ENCODE measurements at regions of chr2 and their contacts with region 1.

Region 1: DNA sequence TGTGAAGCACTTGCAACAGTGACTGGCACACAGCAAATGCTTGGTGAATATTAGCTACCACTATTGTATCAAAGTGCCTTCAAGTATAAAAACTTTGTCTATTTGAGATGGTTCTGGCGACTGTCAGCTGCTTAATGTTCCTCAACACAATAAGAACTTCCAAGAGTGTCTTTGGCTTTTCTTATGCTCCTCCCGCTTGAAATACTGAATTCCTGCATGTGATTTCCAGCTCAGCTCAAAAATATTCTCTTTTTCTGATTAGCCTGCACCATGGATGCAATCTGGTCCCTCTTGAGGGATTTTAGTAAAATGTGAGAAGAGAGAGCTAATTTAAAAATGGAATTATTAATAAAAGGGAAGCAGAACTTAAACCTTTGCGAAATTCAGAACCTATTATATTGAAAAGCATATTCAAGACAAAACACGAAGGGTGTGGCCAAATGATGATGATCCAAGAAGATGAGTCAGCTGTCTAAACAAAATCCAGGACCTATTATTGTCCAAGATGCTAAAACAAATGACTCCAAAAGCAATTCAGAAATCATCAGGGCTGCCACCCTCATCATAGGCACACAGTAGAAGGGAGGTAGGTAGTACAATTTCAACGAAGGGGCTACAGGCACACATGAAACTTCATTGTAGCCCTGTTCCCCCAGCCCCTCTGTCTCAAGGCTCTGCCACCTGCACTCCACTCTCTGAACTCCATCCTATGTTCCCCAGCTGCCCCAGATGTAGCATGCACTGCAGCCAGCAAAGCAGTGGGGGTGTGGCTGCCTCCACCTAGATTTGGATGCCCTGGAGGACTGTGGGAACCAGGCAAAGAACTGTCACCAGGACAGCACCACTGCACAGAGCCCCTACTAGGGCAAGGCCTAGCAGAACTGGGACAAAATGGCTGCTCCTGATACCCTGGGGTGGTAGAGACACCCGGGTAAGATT is 190.1 kb downstream of the ZNF385B start:
- DNase-seq: no peak
- ATAC-seq: peak; percentile 41

Region 2: GRCh38 chr2:177703159-177703558 is 1968.2 kb before region 1 on chr2:
- intact Hi-C with region 1: loop called (anchors 5 kb)
- DNase-seq: no peak
- ATAC-seq: no peak

Region 3: GRCh38 chr2:179513181-179513580 is 158.1 kb before region 1 on chr2:
- intact Hi-C with region 1: no loop called
- DNase-seq: no peak
- ATAC-seq: no peak

Region 4: DNA sequence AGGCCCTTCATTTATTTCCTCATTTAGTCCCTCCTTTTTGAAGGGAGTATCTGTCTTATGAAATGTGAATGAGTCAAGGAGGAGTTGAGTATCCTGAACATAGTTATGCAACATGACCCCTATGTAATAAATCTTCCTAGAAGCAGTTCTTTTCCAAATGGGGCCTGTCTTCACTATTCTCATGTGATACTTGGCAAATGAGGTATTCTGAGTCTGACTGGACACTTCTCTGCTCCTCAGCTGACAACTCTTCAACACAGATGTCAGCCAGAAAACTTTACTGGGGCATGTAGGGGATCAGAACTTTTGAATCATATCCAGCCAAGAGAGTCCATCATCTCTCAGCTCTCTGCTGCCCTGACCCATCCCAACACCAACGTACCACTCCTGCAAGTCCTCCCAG is 101.5 kb before region 1 on chr2:
- intact Hi-C with region 1: no loop called
- DNase-seq: no peak
- ATAC-seq: peak; percentile 96